Dendritic cell treated with granulocyte-macrophage colony-stimulating factor and Interleukin-4, amounts not matched to agents 40 ng/mL and 50 ng/mL, for 4 days (primary cell): ENCODE measurements at regions of chr1 and their contacts with region 1.

Region 1: DNA sequence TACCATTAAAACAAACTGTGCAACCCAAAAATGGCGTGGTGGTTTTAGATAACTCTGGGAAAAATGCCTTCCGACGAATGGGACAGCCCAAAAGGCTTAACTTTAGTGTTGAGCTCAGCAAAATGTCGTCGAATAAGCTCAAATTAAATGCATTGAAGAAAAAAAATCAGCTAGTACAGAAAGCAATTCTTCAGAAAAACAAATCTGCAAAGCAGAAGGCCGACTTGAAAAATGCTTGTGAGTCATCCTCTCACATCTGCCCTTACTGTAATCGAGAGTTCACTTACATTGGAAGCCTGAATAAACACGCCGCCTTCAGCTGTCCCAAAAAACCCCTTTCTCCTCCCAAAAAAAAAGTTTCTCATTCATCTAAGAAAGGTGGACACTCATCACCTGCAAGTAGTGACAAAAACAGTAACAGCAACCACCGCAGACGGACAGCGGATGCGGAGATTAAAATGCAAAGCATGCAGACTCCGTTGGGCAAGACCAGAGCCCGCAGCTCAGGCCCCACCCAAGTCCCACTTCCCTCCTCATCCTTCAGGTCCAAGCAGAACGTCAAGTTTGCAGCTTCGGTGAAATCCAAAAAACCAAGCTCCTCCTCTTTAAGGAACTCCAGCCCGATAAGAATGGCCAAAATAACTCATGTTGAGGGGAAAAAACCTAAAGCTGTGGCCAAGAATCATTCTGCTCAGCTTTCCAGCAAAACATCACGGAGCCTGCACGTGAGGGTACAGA is 82.1 kb downstream of the PRDM2 start:
- H3K4me3 Mint-ChIP-seq: peak overlapping the region; percentile 90
- H3K27ac Mint-ChIP-seq: peak overlapping the region; percentile 93
- H3K4me1 Mint-ChIP-seq: peaks cover 62% of the 10 kb centered on the region
- H3K27me3 Mint-ChIP-seq: no peaks in the 10 kb centered on the region

Region 2: DNA sequence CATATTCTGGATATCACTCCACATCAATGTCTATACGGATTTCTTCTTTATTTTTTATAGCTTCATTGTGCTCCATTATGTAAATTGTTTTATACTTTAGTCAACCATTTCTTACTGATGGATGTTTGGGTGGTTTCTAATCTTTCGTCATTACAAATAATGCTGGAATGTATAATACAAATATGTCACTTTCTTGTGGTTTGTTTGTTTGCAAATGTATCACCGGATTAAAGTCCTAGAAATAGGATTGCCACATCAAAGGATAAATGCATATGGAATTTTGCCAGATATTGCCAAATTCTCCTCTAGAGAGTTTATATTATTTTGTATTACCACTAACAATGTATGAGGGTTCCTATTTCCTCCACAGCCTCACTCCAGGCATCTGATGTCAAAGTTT is 130.8 kb before region 1 on chr1:
- intact Hi-C with region 1: no loop called
- H3K4me3 Mint-ChIP-seq: no peak overlapping the region
- H3K27ac Mint-ChIP-seq: no peak overlapping the region
- H3K4me1 Mint-ChIP-seq: no peaks in the 10 kb centered on the region
- H3K27me3 Mint-ChIP-seq: peaks cover 9% of the 10 kb centered on the region

Region 3: GRCh38 chr1:13699936-13700520 is 82.0 kb before region 1 on chr1 and contains the start of gene PRDM2:
- intact Hi-C with region 1: loop called (anchors 2 kb)
- H3K4me3 Mint-ChIP-seq: peak within 1 kb of the TSS; percentile 84
- H3K27ac Mint-ChIP-seq: peak within 1 kb of the TSS; percentile 94
- H3K4me1 Mint-ChIP-seq: peaks cover 27% of the 10 kb centered on the region
- H3K27me3 Mint-ChIP-seq: peaks cover 10% of the 10 kb centered on the region